Panc1 (cell line): ENCODE measurements at regions of chr2 and their contacts with region 1.

Region 1: GRCh38 chr2:27527182-27527581 is 30.5 kb downstream of the GCKR start:
- DNase-seq: no peak
- ATAC-seq: no peak
- H3K4me3 ChIP-seq: no peak overlapping the region
- H3K27ac ChIP-seq: no peak overlapping the region
- H3K4me1 ChIP-seq: no peaks in the 10 kb centered on the region
- H3K27me3 ChIP-seq: no peaks in the 10 kb centered on the region
- CTCF ChIP-seq: no peak

Region 2: DNA sequence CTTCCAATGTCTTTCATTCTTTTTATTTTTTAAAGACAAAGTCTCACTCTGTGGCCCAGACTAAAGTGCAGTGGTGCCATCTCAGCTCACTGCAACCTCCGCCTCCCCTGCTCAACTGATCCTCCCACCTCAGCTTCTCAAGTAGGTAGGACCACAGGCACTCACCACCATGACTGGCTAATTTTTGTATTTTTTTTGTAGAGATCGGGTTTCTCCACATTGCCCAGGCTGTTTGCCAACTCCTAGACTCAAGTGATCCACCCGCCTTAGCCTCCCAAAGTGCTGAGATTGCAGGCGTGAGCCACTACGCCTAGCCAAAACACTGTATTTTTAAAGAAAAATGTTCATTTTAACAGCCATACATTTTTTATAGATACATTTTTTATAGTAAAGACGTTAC is 17.9 kb before region 1 on chr2:
- CTCF ChIA-PET with region 1: interaction called, 11 read pairs
- POLR2A ChIA-PET with region 1: no interaction called
- in situ Hi-C with region 1: no loop called
- intact Hi-C with region 1: no loop called
- DNase-seq: no peak
- ATAC-seq: no peak
- H3K4me3 ChIP-seq: no peak overlapping the region
- H3K27ac ChIP-seq: no peak overlapping the region
- H3K4me1 ChIP-seq: no peaks in the 10 kb centered on the region
- H3K27me3 ChIP-seq: no peaks in the 10 kb centered on the region
- CTCF ChIP-seq: no peak

Region 3: DNA sequence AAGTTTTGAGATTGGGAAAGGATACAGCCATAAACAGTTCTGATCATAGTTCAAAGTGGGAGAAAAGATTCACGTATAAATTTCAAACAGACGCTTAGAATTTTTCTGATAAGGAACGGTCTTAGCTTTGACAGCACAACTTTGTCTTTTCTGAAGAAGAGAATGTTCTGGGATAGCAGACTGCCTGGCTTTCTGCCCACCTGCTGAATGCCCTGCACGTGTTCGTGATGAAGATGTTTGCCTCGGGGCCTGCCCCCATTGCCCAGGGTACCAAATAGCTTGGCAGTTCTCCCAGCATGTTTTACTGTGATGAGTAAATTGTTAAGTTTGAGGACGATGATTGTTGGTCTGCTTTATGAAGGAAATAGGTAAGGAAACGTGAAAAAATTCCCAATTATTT is 248.9 kb after region 1 on chr2:
- CTCF ChIA-PET with region 1: no interaction called
- POLR2A ChIA-PET with region 1: no interaction called
- in situ Hi-C with region 1: no loop called
- intact Hi-C with region 1: no loop called
- DNase-seq: no peak
- ATAC-seq: no peak
- H3K4me3 ChIP-seq: no peak overlapping the region
- H3K27ac ChIP-seq: no peak overlapping the region
- H3K4me1 ChIP-seq: peaks cover 15% of the 10 kb centered on the region
- H3K27me3 ChIP-seq: no peaks in the 10 kb centered on the region
- CTCF ChIP-seq: no peak

Region 4: GRCh38 chr2:27844821-27845255 is 317.7 kb after region 1 on chr2:
- CTCF ChIA-PET with region 1: no interaction called
- POLR2A ChIA-PET with region 1: interaction called, 11 read pairs
- in situ Hi-C with region 1: no loop called
- intact Hi-C with region 1: no loop called
- DNase-seq: no peak
- ATAC-seq: no peak
- H3K4me3 ChIP-seq: no peak overlapping the region
- H3K27ac ChIP-seq: no peak overlapping the region
- H3K4me1 ChIP-seq: no peaks in the 10 kb centered on the region
- H3K27me3 ChIP-seq: no peaks in the 10 kb centered on the region
- CTCF ChIP-seq: no peak